PC-3 (cell line): ENCODE measurements at regions of chr3 and their contacts with region 1.

Region 1: GRCh38 chr3:129627429-129628168 is 21.1 kb upstream of the PLXND1 start:
- DNase-seq: peak; percentile 67
- ATAC-seq: peak; percentile 50
- H3K4me3 ChIP-seq: no peak overlapping the region
- H3K27ac ChIP-seq: no peak overlapping the region
- H3K4me1 ChIP-seq: peaks cover 16% of the 10 kb centered on the region
- H3K27me3 ChIP-seq: no peaks in the 10 kb centered on the region
- CTCF ChIP-seq: peak; percentile 75

Region 2: GRCh38 chr3:129490242-129491045 is 137.2 kb before region 1 on chr3:
- CTCF ChIA-PET with region 1: interaction called, 4 read pairs
- POLR2A ChIA-PET with region 1: no interaction called
- intact Hi-C with region 1: loop called (anchors 1 kb)
- DNase-seq: peak; percentile 75
- ATAC-seq: peak; percentile 90
- H3K4me3 ChIP-seq: no peak overlapping the region
- H3K27ac ChIP-seq: peak overlapping the region; percentile 59
- H3K4me1 ChIP-seq: peaks cover 34% of the 10 kb centered on the region
- H3K27me3 ChIP-seq: no peaks in the 10 kb centered on the region
- CTCF ChIP-seq: peak; percentile 84

Region 3: DNA sequence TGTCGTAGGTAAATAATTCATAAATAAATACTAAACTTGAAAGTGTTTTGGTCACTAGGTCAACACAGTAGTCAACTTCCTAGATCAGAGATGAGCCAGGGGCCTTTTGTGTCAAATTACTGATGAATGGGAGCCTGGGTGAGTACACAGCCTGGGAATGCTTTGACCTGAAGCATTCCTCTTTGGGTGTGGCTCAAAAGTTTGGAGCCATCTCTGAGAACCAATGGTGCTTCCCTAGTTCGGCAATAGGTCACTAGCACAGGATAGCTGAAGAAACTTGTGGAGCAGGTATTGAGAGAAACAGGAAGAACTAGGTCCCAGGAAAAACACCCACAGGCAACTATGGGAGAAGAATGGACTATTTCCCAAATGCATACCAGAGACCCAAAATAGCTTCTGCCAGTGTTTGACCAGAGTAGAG is 35.4 kb after region 1 on chr3:
- CTCF ChIA-PET with region 1: no interaction called
- POLR2A ChIA-PET with region 1: no interaction called
- intact Hi-C with region 1: no loop called
- DNase-seq: peak; percentile 97
- ATAC-seq: peak; percentile 82
- H3K4me3 ChIP-seq: peak overlapping the region; percentile 33; the same call in 1 of the 2 replicates
- H3K27ac ChIP-seq: peak overlapping the region; percentile 98
- H3K4me1 ChIP-seq: peaks cover 60% of the 10 kb centered on the region
- H3K27me3 ChIP-seq: no peaks in the 10 kb centered on the region
- CTCF ChIP-seq: no peak

Region 4: GRCh38 chr3:129809297-129809696 is 181.7 kb after region 1 on chr3:
- CTCF ChIA-PET with region 1: no interaction called
- POLR2A ChIA-PET with region 1: no interaction called
- intact Hi-C with region 1: no loop called
- DNase-seq: no peak
- ATAC-seq: no peak
- H3K4me3 ChIP-seq: no peak overlapping the region
- H3K27ac ChIP-seq: no peak overlapping the region
- H3K4me1 ChIP-seq: no peaks in the 10 kb centered on the region
- H3K27me3 ChIP-seq: no peaks in the 10 kb centered on the region
- CTCF ChIP-seq: no peak

Region 5: DNA sequence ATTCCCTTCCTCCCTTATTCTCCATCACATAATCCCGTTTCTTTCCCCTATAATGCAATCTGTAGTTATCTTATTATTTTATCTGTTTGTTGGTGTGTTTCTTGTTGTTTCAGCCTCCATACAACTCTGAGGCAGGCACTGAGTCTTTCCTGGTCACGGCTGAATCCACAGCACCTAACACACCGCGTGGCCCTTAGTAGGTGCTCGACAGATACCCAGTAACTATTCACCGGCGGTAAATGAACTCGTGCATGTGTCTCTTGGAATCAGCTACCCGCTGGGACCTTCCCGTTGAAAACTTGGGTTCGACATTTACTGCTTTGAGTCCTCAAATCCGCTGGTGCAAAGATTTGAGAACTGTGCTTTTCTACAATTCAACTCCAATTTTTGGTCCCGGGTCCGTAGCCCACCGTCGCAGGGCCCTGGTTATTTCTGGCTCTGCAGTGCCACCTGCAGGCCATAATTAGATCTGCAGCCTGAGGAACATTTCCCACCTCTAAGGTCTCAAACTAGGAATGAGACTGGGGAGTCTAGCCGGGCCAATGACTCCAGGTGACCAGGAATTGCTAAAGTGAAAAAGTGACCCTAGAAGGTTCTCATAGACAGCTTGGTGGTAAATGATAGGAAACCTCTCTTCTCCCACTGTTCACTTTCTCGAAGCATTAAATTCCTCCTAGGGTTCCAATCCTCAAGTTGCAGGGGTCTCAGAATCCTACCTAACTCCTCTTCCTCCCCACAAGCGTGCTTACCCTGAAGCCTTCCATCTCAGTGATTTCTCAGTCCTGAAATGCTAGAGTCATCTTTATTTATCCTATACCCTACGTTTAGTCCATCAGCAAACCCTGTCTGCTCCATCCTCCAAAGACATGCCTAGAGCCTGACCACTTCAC is 306.9 kb after region 1 on chr3:
- CTCF ChIA-PET with region 1: no interaction called
- POLR2A ChIA-PET with region 1: no interaction called
- intact Hi-C with region 1: loop called (anchors 1 kb)
- DNase-seq: peak; percentile 42
- ATAC-seq: peak; percentile 74
- H3K4me3 ChIP-seq: peak overlapping the region; percentile 64
- H3K27ac ChIP-seq: no peak overlapping the region
- H3K4me1 ChIP-seq: no peaks in the 10 kb centered on the region
- H3K27me3 ChIP-seq: no peaks in the 10 kb centered on the region
- CTCF ChIP-seq: peak; percentile 89

Region 6: DNA sequence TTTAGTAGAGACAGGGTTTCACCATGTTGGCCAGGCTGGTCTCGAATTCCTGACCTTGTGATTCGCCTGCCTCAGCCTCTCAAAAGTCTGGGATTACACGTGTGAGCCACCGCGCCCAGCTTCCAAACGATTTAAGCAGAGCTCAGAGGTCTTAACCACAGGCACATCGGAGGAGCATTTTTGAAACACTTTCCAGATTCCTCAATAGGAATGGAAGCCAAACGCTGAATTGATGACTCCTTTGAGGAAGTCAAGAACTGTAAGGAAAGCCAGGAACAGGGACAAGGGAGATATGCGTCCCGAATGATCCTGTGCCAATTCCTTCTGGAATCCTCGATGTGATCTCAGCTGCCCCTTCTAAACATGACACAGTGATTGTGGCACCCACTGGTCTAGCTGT is 386.9 kb after region 1 on chr3:
- CTCF ChIA-PET with region 1: no interaction called
- POLR2A ChIA-PET with region 1: no interaction called
- intact Hi-C with region 1: loop called (anchors 10 kb)
- DNase-seq: no peak
- ATAC-seq: no peak
- H3K4me3 ChIP-seq: no peak overlapping the region
- H3K27ac ChIP-seq: no peak overlapping the region
- H3K4me1 ChIP-seq: no peaks in the 10 kb centered on the region
- H3K27me3 ChIP-seq: no peaks in the 10 kb centered on the region; the same call in 1 of the 2 replicates
- CTCF ChIP-seq: no peak